ENCODE measurements at regions of chr7 and their contacts with region 1.

Region 1: GRCh38 chr7:66920769-66921395 is at the start of gene TMEM248:
- DNase-seq: peak; percentile 95
- H3K4me3 Mint-ChIP-seq: peak within 1 kb of the TSS; percentile 100
- H3K27ac Mint-ChIP-seq: peak within 1 kb of the TSS; percentile 96
- H3K4me1 Mint-ChIP-seq: peaks cover 38% of the 10 kb centered on the region
- H3K27me3 Mint-ChIP-seq: no peaks in the 10 kb centered on the region
- total RNA-seq, gene TMEM248: 51.4 to 54.0 TPM

Region 2: DNA sequence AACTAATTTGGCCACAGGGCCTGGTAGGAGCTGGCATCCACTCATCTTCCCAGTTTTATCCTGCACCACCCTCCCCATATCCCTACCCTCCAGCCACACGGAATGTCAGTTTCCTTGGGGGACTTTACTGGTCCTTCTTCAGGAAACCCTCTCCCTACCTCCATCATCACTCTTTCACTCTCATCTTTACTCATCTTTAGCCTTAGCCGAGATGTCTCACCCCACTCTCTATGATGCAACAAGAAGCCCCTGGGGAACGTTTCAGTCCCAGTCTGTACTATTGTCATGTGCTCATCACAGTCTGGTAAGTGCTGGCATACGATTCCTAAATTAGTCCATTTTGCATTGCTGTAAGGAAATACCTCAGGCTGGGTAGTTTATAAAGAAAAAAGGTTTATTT is 34.7 kb before region 1 on chr7:
- CTCF ChIA-PET with region 1: no interaction called
- intact Hi-C with region 1: loop called (anchors 2 kb)
- DNase-seq: no peak
- H3K4me3 Mint-ChIP-seq: no peak overlapping the region
- H3K27ac Mint-ChIP-seq: no peak overlapping the region
- H3K4me1 Mint-ChIP-seq: peaks cover 27% of the 10 kb centered on the region
- H3K27me3 Mint-ChIP-seq: no peaks in the 10 kb centered on the region

Measured in activated naive CD4-positive, alpha-beta T cell treated with anti-CD3 and anti-CD28 coated beads for 36 hours (primary cell).